ENCODE measurements at regions of chrX and their contacts with region 1.

Region 1: GRCh38 chrX:154490414-154491083 is at the start of gene SLC10A3:
- DNase-seq: peak; percentile 81 to 92
- ATAC-seq: peak; percentile 86 to 94 (median 86)
- H3K4me3 ChIP-seq: peak within 1 kb of the TSS; percentile 63
- H3K4me3 Mint-ChIP-seq: peak within 1 kb of the TSS; percentile 90
- H3K27ac ChIP-seq: peak within 1 kb of the TSS; percentile 88
- H3K27ac Mint-ChIP-seq: peak within 1 kb of the TSS; percentile 88 to 93
- H3K4me1 ChIP-seq: peaks cover 43% of the 10 kb centered on the region
- H3K4me1 Mint-ChIP-seq: peaks cover 15 to 17% of the 10 kb centered on the region in 2 donors
- H3K27me3 ChIP-seq: no peaks in the 10 kb centered on the region
- H3K27me3 Mint-ChIP-seq: no peaks in the 10 kb centered on the region
- CTCF ChIP-seq: no peak
- total RNA-seq, gene SLC10A3: 26.5 to 42.1 (median 31.8) TPM

Region 2: DNA sequence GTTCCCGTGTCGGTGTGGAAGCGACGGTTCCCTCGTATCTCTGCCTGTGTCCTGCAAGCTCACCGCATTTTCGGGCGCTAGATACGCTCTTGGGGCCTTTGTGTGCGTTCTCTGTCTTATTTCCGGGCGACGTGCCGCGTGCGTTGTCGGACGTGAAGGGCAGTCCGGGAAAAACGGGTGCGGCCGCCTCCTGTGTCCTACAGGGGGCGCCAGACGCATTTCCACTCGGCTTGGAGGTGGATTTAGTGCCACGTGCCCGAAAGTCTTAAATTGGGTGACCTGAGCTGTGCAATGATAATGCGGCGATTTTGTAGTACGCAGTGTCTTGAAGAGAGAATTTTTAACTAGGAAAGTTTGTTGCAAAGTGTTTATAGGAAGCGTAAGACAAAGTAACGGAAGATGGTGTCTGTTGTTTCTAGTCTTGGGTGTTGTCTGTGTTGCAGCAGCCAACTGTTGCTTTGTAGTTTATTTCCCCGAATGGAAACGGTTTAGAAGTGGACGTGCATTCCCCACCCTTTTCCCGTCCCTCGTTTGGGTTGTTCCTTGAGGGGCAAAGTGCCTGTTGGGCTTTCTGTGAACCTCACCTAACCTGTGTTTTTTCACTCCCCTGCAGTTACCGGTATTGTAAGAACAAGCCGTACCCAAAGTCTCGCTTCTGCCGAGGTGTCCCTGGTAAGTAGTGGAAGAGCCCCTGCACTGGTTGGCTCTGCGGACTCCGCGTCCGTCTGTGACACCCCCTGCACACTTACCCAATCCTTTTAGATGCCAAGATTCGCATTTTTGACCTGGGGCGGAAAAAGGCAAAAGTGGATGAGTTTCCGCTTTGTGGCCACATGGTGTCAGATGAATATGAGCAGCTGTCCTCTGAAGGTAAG is 91.6 kb before region 1 on chrX:
- intact Hi-C with region 1: no loop called
- DNase-seq: peak; percentile 75 to 89
- ATAC-seq: peak; percentile 36 to 71 (median 43)
- H3K4me3 ChIP-seq: peak overlapping the region; percentile 95
- H3K4me3 Mint-ChIP-seq: peak overlapping the region; percentile 96
- H3K27ac ChIP-seq: peak overlapping the region; percentile 99
- H3K27ac Mint-ChIP-seq: peak overlapping the region; percentile 98
- H3K4me1 ChIP-seq: peaks cover 25% of the 10 kb centered on the region
- H3K4me1 Mint-ChIP-seq: peaks cover 14 to 19% of the 10 kb centered on the region in 2 donors
- H3K27me3 ChIP-seq: no peaks in the 10 kb centered on the region
- H3K27me3 Mint-ChIP-seq: peaks cover 0 to 8% of the 10 kb centered on the region in 2 donors
- CTCF ChIP-seq: peak; percentile 67

Region 3: DNA sequence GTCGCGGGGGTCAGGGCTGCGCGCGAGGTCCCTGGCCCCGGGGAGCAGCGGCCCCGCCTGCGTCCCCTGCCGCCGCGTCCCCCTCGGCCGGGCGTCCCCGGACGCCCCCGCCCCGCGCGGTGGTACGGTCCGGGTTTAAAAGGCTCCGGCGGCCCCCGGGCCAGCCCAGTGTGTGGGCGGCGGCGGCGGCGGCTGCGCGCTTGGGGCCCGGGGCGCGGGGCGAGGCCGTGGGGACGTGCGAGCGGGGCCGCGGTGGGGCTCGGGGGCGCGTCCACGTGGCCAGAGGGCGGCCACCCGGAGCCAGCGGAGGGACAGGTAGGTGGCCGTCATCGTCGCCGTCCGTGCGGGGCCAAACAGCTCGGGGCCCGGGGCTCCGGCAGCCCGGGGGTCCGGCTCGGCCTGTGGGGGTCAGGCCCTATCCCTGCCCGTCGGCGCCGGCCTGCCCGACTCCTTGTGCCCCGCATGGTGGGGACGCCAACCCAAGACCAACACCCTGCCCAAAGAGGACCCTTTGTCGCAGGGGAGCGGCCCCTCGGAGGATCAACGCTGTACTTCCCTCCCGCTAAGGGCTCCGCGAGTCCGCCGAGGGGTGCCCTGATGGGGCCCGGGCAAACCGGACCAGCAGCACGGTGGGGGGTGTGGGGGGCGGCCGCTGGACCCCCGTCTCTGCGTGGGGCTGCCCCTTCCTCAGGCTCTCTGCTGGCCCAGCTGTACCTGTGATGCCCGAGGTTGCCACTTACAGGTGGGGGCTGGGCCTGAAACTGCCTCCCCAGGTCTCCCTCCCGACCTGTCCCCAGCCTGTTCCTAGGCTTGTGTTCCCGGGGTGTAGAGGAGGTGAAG is 32.2 kb before region 1 on chrX and contains the start of gene PLXNA3:
- intact Hi-C with region 1: no loop called
- DNase-seq: peak; percentile 57 to 80
- ATAC-seq: peak; percentile 84 to 91 (median 87)
- H3K4me3 ChIP-seq: peak within 1 kb of the TSS; percentile 49
- H3K4me3 Mint-ChIP-seq: peak within 1 kb of the TSS; percentile 95
- H3K27ac ChIP-seq: no peak within 1 kb of the TSS
- H3K27ac Mint-ChIP-seq: peak within 1 kb of the TSS; percentile 83 to 92
- H3K4me1 ChIP-seq: peaks cover 21% of the 10 kb centered on the region
- H3K4me1 Mint-ChIP-seq: peaks cover 6 to 18% of the 10 kb centered on the region in 2 donors
- H3K27me3 ChIP-seq: no peaks in the 10 kb centered on the region
- H3K27me3 Mint-ChIP-seq: peaks cover 0 to 7% of the 10 kb centered on the region in 2 donors
- CTCF ChIP-seq: no peak
- total RNA-seq, gene PLXNA3: 20.8 to 34.3 (median 32.2) TPM

Region 4: DNA sequence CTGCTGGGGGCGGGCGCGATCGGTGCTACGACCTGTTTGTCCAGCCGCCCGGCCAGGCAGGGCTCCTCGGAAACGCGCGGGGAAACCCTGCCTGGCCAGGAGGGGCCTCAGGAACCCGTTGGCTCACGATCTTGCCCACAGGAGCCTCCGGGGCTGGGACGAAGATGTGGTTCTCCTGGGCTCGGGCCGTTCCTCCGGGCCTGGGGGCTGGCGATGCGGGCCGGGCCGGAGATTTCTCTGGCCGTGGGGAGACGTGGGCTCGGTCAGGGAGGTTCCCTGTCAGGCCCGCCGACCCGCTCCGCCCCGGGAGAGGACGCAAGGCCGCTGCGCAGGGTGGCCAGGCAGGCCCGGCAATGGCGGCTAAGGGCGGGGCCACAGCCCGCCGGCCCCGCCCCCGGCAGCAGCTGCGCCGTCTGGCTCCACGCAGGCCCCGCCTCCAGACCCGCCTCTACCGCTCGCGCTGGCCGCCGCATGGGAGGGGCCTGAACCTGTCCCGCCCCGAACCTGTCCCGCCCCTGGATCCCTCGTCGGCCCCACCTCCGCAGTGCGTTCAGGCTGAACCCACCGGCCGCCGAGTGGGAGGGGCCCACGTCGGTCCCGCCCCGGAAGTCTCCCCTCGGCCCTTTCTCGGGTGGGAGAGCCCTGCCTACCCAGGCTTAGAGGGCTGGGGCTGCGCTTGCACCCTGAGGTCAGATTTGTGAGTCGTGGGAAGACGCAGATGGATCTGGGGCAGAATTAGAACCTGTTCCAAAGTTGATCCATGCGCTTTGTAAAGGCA is 25.5 kb after region 1 on chrX and contains the start of gene FAM3A:
- intact Hi-C with region 1: loop called (anchors 1 kb)
- DNase-seq: peak; percentile 84 to 93
- ATAC-seq: peak; percentile 93 to 99 (median 94)
- H3K4me3 ChIP-seq: peak within 1 kb of the TSS; percentile 87
- H3K4me3 Mint-ChIP-seq: peak within 1 kb of the TSS; percentile 86
- H3K27ac ChIP-seq: peak within 1 kb of the TSS; percentile 88
- H3K27ac Mint-ChIP-seq: peak within 1 kb of the TSS; percentile 84 to 91
- H3K4me1 ChIP-seq: peaks cover 29% of the 10 kb centered on the region
- H3K4me1 Mint-ChIP-seq: peaks cover 13 to 23% of the 10 kb centered on the region in 2 donors
- H3K27me3 ChIP-seq: no peaks in the 10 kb centered on the region
- H3K27me3 Mint-ChIP-seq: no peaks in the 10 kb centered on the region
- CTCF ChIP-seq: no peak
- total RNA-seq, gene FAM3A: 31.1 to 38.0 (median 37.3) TPM

Region 5: DNA sequence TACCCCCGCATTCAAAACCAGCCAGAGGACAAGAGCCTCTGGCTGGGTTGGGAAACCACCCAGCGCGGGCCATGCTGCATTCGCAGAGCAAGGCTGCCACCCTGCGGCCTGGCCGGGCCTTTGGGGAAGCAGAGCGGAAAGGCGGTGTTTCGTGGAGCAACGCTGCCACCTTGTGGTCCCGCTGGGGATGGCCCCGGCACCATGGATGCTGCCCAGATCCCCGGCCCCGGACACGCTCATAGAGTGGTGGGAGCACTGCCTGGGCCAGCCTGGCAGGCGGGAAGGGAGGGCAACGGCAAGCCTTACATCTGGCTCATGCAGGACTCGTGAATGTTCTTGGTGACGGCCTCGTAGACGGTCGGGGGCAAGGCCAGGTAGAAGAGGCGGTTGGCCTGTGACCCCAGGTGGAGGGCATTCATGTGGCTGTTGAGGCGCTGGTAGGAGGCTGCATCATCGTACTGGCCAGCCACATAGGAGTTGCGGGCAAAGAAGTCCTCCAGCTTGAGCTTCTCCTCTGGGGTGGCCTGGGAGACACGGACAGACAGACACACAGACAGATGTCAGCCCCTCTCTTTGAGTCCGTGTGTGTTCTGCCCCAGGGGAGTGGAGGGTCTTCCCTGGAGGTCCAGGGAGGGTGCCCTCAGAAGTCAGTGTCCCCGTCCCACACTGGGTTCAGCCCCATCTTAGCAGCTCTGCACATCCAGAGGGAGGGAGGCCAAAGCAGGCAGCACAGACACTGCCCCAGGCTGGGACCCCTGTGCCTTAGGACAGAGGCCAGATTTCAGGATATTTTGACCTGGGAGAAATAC is 44.5 kb after region 1 on chrX:
- intact Hi-C with region 1: no loop called
- DNase-seq: peak; percentile 85 to 92
- ATAC-seq: peak; percentile 93 to 100 (median 95)
- H3K4me3 ChIP-seq: no peak overlapping the region
- H3K4me3 Mint-ChIP-seq: peak overlapping the region; percentile 9
- H3K27ac ChIP-seq: peak overlapping the region; percentile 50
- H3K27ac Mint-ChIP-seq: peak overlapping the region; percentile 72 to 85
- H3K4me1 ChIP-seq: peaks cover 34% of the 10 kb centered on the region
- H3K4me1 Mint-ChIP-seq: peaks cover 15 to 17% of the 10 kb centered on the region in 2 donors
- H3K27me3 ChIP-seq: no peaks in the 10 kb centered on the region
- H3K27me3 Mint-ChIP-seq: no peaks in the 10 kb centered on the region
- CTCF ChIP-seq: peak; percentile 94

Measured in natural killer cell (primary cell).